Colonic mucosa (tissue), 4 donors: ENCODE measurements at regions of chr18 and their contacts with region 1.

Region 1: DNA sequence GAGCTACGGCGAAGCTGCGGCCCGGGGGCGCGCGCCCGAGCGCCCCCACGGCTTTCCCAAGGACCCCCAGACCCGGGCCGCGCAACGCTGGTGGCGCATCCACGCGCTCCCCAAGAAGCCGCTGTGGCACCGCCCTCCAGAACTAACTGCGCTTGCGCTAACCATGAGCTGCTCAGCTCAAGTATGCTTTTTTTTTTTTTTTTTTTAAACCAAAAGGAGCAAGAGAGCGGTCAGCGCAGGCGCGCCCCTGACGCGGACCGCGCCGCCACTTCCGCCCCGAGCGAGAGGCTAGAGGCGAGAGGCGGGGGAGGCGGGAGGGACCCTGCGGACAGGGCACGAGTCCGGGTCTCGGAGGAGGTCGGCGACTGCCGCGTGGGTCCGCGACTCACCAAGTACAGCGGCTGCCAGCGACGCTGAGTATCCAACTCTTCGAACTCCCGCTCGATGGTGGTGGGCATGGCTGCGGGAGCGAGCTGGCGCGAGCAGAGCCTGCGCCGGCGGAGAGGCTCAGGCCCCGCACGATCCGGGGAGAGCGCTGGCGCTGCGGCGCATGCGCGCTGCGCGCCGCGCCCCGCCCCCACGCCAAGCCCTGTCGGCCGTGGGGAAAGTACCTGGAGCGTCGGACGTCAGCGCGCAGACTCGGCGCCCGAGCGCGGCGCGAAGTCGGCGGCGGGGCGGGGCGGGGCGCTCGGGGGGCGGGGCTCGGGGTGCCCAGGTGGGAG is at the start of gene PTPN2:
- DNase-seq: peak; percentile 93
- H3K4me3 ChIP-seq: peak within 1 kb of the TSS; percentile 59
- H3K27ac ChIP-seq: peak within 1 kb of the TSS; percentile 98
- H3K4me1 ChIP-seq: peaks cover 4% of the 10 kb centered on the region
- H3K27me3 ChIP-seq: no peaks in the 10 kb centered on the region
- CTCF ChIP-seq: no peak
- total RNA-seq, gene PTPN2: 32.2 to 34.3 TPM

Region 2: DNA sequence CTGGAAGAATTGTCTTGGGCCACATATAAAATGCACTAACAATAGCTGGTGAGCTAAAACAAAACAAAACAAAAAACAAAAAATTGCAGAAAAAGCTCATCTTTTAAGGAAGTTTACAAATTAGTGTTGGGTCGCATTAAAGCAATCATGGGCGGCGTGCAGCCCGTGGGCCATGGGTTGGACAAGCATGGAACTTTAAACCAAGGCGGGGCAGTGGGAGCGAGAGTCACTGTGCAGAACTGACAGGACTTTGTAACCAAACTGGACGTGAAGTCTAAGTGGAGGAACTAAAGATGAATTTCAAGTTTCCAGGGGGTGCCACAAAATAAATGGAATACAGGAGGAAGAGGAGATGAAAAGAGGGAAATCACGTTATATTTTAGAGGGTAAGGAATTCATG is 100.3 kb before region 1 on chr18:
- intact Hi-C with region 1: no loop called
- DNase-seq: peak; percentile 46
- H3K4me3 ChIP-seq: no peak overlapping the region
- H3K27ac ChIP-seq: no peak overlapping the region
- H3K4me1 ChIP-seq: no peaks in the 10 kb centered on the region
- H3K27me3 ChIP-seq: no peaks in the 10 kb centered on the region
- CTCF ChIP-seq: no peak

Region 3: GRCh38 chr18:12838178-12838634 is 45.6 kb before region 1 on chr18:
- intact Hi-C with region 1: loop called (anchors 10 kb)
- DNase-seq: peak; percentile 86
- H3K4me3 ChIP-seq: no peak overlapping the region
- H3K27ac ChIP-seq: peak overlapping the region; percentile 91
- H3K4me1 ChIP-seq: no peaks in the 10 kb centered on the region
- H3K27me3 ChIP-seq: no peaks in the 10 kb centered on the region
- CTCF ChIP-seq: no peak

Region 4: GRCh38 chr18:13076886-13077285 is 193.0 kb after region 1 on chr18:
- intact Hi-C with region 1: no loop called
- DNase-seq: no peak
- H3K4me3 ChIP-seq: no peak overlapping the region
- H3K27ac ChIP-seq: no peak overlapping the region
- H3K4me1 ChIP-seq: no peaks in the 10 kb centered on the region
- H3K27me3 ChIP-seq: no peaks in the 10 kb centered on the region
- CTCF ChIP-seq: no peak

Region 5: DNA sequence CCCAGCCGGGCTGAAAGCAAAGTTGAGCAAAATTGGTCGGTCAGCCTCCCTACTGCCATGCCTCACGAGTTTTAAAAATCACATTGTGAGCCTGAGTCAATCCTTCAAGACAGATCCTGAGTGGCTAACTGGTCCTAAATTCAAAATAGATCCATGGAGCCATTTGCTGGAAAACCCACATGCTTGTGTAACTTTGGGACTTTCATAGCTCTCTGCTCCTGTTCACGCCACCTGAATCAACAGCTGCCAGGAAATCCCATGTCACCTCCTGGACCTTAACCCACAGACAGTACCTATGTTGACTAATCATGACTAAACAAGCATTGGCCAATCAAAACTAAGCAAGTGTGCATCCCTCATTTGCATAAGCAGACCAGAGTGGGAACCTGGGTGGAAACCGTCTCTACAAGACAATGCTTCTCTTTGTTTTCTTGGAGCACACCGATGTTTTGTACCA is 291.9 kb after region 1 on chr18:
- intact Hi-C with region 1: no loop called
- DNase-seq: no peak
- H3K4me3 ChIP-seq: no peak overlapping the region
- H3K27ac ChIP-seq: no peak overlapping the region
- H3K4me1 ChIP-seq: peaks cover 10% of the 10 kb centered on the region
- H3K27me3 ChIP-seq: no peaks in the 10 kb centered on the region
- CTCF ChIP-seq: no peak